Adrenal gland (tissue), 19 donors: ENCODE measurements at regions of chr12 and their contacts with region 1.

Region 1: DNA sequence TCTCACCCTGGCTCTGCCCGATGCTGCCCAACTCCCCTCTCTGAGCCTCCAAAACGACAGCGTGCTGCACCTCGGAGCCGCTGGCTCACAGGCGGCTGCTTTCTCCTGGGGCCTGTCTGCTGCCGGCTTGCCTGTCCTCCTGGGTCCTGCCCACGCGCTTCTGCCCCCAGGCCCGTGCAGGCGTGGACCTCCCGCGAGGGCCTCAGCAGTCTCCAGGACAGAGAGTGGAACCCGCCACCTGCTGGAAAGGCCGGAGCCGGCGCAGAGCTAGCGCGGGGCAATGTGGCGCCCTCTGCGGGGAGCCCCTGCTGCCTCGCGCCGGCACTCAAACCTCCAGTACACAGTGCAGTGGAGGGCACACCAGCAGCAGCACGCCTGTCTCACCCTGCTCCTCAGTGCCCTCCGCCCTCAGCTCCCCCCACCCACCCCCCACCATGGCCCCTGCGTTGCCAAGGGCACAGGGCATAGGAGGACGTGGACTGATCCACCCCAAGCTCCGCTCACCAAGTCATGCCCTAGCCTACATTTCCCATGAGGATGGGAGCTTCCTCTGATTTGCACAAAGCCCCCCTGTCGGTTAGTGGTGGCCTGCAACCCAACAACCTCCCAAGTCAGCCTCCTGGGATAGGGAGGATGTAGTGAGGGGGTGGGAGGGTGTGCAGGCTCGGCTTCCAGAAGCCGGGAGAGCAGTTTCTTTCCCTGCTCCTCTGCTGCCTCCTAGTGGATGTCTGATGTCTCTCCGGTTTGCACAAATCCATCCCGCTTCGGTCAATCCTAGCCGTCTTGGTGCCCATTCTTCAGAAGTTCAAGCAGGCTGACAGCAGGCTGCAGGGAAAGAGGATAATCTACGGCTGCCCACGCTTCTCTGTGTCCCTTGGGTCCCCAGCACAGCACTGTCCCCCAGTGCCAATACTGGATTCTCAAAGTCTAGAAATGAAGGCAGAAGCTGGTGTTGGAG is 25.2 kb downstream of the KRT8 start:
- DNase-seq: peak; percentile 76 to 86 (median 81)
- H3K4me3 ChIP-seq: peak overlapping the region in 1 of 4 donors; percentile 14
- H3K27ac ChIP-seq: no peak overlapping the region
- H3K4me1 ChIP-seq: peaks cover 0 to under 1% of the 10 kb centered on the region in 2 donors
- H3K27me3 ChIP-seq: no peaks in the 10 kb centered on the region
- CTCF ChIP-seq: peak; percentile 66 to 88 (median 74)
- POLR2A ChIP-seq: no peak

Region 2: GRCh38 chr12:52139552-52140062 is 740.1 kb before region 1 on chr12:
- intact Hi-C with region 1: loop called in 1 of 2 experiments (anchors 10 kb)
- DNase-seq: peak in 1 of 7 donors; percentile 47
- H3K4me3 ChIP-seq: no peak overlapping the region
- H3K27ac ChIP-seq: no peak overlapping the region
- H3K4me1 ChIP-seq: no peaks in the 10 kb centered on the region
- H3K27me3 ChIP-seq: no peaks in the 10 kb centered on the region
- CTCF ChIP-seq: peak; percentile 36 to 60 (median 54)
- POLR2A ChIP-seq: no peak

Region 3: DNA sequence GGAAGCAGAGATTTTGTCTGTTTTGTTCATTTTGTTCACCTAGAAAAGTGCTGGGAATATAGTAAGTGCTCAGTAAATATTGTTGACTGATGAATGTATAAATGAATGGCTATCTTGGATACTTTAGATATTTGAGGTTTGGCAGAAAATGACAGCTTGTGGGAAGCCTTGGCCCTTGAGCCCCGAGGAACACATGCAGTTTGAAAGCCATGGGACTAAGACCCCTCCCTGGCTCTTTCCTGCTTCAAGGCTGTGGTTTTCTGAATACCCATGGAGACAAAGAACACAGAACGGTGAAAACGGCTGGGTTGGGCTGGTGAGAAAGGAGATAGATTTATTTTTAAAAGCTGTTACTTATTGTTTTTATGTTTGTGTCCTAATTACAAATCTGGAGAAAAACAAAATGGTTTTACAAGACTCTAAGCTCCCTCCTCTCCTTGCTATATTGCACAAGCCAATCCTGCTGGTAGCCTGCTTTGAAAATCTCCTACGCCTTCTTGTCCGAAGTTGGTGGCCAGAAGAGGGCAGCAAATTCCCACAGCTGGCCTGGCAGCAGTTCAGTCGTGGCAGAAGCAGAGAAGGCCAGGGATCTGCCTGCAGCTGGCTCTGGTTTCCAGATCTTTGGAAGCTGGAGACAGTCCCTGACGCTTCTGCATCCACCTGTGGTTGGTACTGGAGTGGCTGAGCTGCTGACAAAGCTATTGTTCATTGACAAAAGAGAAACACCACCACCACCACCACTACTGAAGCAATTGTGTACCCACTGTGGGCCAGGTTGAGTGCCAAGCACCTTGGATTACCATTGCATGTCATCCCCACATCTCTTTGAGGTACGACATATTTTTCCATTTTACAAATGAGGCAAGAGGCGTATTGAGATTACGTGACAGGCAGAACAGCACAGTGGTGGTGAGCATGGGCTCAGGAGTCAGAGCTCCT is 507.2 kb before region 1 on chr12:
- intact Hi-C with region 1: loop called (anchors 5 kb)
- DNase-seq: peak; percentile 82 to 94 (median 87)
- H3K4me3 ChIP-seq: no peak overlapping the region
- H3K27ac ChIP-seq: no peak overlapping the region
- H3K4me1 ChIP-seq: no peaks in the 10 kb centered on the region
- H3K27me3 ChIP-seq: no peaks in the 10 kb centered on the region
- CTCF ChIP-seq: peak; percentile 71 to 89 (median 85)
- POLR2A ChIP-seq: no peak

Region 4: DNA sequence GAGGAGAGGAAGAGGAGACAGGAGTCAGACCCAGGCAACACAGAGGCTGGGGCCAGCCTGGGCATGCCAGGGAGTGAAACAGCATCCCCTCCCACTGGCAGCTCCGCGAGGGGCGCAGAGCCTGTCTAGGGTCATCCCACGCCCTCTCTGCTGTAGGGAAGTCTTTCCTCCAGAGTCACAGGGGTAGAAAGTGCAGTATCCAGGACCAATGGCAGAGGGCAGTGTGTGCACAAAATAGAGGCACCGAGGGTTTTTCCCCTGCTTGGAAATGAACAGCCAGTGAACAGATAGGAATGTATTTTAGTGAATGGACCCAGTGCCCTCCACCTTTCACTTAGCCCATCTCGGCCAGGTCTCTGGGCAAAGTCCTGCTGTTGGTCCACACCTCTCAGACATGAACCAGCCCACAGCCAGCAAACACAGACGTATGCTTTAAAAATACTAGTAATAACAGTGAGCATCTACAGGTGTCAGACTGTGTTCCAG is 296.7 kb before region 1 on chr12:
- intact Hi-C with region 1: loop called (anchors 5 kb)
- DNase-seq: peak; percentile 48 to 83 (median 68)
- H3K4me3 ChIP-seq: no peak overlapping the region
- H3K27ac ChIP-seq: no peak overlapping the region
- H3K4me1 ChIP-seq: no peaks in the 10 kb centered on the region
- H3K27me3 ChIP-seq: no peaks in the 10 kb centered on the region
- CTCF ChIP-seq: peak; percentile 69 to 77 (median 74)
- POLR2A ChIP-seq: no peak